ENCODE measurements at regions of chr11 and their contacts with region 1.

Region 1: DNA sequence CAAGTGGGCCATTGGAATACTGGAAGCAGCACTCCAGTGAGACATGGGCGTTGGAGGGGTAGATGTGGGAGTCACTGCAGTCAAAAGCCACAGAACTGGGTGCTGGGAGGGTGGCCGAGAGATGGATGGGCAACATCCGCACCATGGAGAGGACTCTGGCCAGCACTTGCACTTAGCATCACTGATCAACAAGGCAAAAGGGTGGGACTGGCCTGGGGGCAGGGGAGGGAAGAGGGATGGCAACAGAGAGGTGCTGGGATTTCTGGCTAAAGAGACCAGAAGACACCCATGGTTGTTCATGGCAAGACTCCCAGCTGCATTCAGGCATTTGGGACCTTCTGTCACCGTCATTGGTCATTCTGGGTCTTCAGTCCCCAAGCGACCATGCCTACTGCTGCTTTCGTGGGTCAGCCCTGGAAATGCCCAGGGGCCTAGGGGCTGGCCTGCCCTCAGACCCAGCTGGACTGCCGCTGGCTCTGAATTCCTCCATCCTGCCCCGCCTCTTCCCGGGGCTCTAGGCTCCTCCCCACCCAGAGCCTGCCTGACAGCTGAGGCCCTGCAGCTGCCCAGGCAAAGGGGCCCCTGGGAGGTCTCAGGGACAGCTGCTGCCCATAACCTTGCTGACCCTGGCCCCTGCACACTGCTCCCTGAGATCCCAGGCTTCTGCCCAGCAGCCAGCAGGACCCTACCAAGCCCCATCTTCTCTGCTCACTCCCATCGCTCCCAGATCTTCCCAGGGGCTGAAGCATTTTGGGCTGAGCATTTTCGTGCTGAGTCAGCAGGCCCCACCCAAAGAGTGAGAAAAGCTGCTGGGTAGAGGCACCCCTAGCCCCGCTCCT is 13.0 kb upstream of the CDC42EP2 start:
- DNase-seq: peak; percentile 50
- ATAC-seq: peak; percentile 80
- H3K4me3 ChIP-seq: no peak overlapping the region
- H3K27ac ChIP-seq: peak overlapping the region; percentile 57
- H3K4me1 ChIP-seq: peaks cover 54% of the 10 kb centered on the region
- H3K27me3 ChIP-seq: no peaks in the 10 kb centered on the region
- CTCF ChIP-seq: no peak
- POLR2A ChIP-seq: no peak
- RAD21 ChIP-seq: no peak

Region 2: DNA sequence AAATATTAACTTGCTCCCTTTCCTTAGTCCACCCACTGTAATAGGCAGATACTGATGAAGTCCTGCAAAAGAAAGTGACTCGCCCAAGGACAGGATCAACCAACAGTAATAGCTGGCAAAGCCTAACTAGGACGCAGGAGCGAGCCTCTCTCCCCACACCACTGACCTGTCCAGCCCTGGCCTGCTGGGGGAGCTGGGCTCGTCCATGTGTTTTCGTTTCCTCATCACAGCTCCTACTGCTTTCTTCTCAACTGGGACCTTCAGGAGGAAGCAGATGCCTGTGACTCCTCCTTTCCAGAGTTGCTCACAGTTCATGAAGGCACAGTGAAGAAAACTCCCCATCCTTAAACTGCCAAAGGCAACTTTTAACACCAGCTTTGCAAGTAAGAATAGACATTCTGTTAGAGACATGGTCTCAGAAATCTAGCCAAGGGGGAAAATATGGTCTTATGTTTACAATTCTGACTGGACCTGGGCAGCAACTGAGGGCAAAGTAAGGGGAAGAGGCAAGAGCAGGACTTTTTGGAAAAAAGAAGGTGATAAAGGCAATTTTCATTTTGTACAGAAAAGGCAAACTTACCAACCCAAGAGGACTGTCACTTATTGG is 354.4 kb before region 1 on chr11:
- CTCF ChIA-PET with region 1: no interaction called
- POLR2A ChIA-PET with region 1: no interaction called
- dilution Hi-C with region 1: no loop called
- in situ Hi-C with region 1: no loop called
- intact Hi-C with region 1: no loop called
- DNase-seq: no peak
- ATAC-seq: no peak; the same call in 1 of the 2 replicates
- H3K4me3 ChIP-seq: no peak overlapping the region
- H3K27ac ChIP-seq: no peak overlapping the region
- H3K4me1 ChIP-seq: no peaks in the 10 kb centered on the region
- H3K27me3 ChIP-seq: peaks cover 33% of the 10 kb centered on the region
- CTCF ChIP-seq: no peak
- POLR2A ChIP-seq: no peak
- RAD21 ChIP-seq: no peak

Region 3: DNA sequence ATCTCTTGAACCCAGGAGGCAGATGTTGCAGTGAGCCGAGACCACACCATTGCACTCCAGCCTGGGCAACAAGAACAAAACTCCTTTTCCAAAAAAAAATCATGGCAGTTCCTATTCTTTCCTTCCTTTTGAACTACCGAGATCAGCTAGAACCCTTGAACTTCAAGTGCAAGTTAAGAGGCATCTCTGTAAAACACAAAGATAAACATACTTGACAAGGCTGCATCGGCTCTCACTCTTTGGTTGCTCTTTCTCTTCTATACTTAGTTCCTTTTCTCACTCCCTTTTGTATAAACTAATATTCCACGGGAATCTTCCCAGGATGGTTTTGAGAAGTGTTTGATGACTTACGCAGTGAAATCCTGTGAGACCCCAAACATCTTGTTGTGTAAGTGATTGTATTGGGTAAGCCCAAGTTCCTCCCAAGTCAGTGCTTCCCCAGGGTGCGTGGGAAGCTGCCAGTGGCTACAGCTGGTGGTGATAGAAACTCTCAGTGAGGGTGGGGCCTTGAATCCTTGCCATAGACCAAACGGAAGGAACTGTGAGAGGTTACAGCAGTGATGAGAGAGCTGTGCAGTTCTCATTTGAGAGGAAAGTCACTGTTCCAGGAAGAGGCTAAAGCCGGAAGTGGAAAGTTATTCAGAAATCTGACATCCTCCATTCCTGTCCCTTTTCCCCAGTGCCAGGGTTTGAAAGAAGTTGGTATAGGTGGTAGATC is 11.1 kb before region 1 on chr11:
- CTCF ChIA-PET with region 1: no interaction called
- POLR2A ChIA-PET with region 1: interaction called, 11 read pairs
- dilution Hi-C with region 1: no loop called
- in situ Hi-C with region 1: no loop called
- intact Hi-C with region 1: no loop called
- DNase-seq: peak; percentile 100
- ATAC-seq: peak; percentile 62
- H3K4me3 ChIP-seq: no peak overlapping the region; the same call in 1 of the 2 replicates
- H3K27ac ChIP-seq: peak overlapping the region; percentile 94
- H3K4me1 ChIP-seq: peaks cover 27% of the 10 kb centered on the region
- H3K27me3 ChIP-seq: no peaks in the 10 kb centered on the region
- CTCF ChIP-seq: no peak
- POLR2A ChIP-seq: peak; percentile 73; the same call in 1 of the 2 replicates
- RAD21 ChIP-seq: no peak

Region 4: GRCh38 chr11:65366340-65366773 is 64.6 kb after region 1 on chr11:
- CTCF ChIA-PET with region 1: no interaction called
- POLR2A ChIA-PET with region 1: no interaction called
- dilution Hi-C with region 1: no loop called
- in situ Hi-C with region 1: no loop called
- intact Hi-C with region 1: no loop called
- DNase-seq: peak; percentile 86
- ATAC-seq: peak; percentile 94
- H3K4me3 ChIP-seq: no peak overlapping the region
- H3K27ac ChIP-seq: no peak overlapping the region
- H3K4me1 ChIP-seq: peaks cover 2% of the 10 kb centered on the region
- H3K27me3 ChIP-seq: no peaks in the 10 kb centered on the region
- CTCF ChIP-seq: peak; percentile 85
- POLR2A ChIP-seq: peak; percentile 38; the same call in 1 of the 2 replicates
- RAD21 ChIP-seq: peak; percentile 88